Activated naive CD8-positive, alpha-beta T cell treated with anti-CD3 and anti-CD28 coated beads, Interleukin-2, amount 10 ng/mL, durations not matched to agents 7 days and 5 days (primary cell): ENCODE measurements at regions of chr12 and their contacts with region 1.

Region 1: DNA sequence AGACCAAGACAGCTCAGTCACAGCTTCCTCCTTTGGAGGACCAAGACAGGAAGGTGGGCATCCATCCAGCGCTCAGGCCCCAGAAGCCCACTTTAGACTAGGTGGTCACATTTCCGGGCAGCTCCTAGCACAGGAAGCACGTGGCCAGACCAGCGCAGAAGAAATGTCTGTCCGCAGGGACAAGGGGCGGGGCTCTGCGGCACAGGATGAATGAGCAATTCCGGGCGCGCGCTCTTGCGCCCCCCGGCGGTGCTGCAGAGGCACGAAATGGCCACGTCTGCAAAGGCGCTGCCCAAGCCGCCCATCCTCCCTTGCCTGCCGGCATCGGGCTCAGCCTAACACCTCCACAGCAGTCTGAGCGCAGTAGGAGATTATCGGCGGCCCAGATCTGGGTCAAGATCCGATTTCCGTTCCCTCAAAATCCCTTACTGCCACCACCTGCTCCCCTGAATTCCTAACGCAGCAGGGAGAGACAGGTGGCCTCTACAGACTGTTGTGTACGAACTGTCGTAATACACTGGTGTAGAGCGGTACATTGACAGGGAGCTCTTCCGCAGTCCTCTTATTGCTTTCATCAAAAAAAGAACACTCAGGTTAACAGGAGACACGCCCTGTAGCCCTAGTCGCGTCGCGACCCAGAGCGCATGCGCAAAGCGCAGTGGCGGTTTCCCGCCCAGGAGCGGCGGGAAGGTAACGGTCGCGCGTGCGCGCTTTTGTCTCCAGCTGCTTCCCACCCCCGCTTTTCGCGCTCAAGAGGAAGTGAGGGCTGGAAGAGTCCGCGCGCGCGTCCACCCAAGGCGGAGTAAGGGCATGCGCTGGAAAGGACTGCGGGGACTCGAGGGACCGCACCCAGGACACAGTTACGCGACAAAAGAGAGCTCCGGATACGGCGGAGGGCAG is 794 bp downstream of the TUBA1B start:
- DNase-seq: peak; percentile 95
- ATAC-seq: peak; percentile 53
- H3K4me3 Mint-ChIP-seq: peak overlapping the region; percentile 95
- H3K27ac Mint-ChIP-seq: peak overlapping the region; percentile 98
- H3K4me1 Mint-ChIP-seq: peaks cover 51% of the 10 kb centered on the region
- H3K27me3 Mint-ChIP-seq: no peaks in the 10 kb centered on the region

Region 2: DNA sequence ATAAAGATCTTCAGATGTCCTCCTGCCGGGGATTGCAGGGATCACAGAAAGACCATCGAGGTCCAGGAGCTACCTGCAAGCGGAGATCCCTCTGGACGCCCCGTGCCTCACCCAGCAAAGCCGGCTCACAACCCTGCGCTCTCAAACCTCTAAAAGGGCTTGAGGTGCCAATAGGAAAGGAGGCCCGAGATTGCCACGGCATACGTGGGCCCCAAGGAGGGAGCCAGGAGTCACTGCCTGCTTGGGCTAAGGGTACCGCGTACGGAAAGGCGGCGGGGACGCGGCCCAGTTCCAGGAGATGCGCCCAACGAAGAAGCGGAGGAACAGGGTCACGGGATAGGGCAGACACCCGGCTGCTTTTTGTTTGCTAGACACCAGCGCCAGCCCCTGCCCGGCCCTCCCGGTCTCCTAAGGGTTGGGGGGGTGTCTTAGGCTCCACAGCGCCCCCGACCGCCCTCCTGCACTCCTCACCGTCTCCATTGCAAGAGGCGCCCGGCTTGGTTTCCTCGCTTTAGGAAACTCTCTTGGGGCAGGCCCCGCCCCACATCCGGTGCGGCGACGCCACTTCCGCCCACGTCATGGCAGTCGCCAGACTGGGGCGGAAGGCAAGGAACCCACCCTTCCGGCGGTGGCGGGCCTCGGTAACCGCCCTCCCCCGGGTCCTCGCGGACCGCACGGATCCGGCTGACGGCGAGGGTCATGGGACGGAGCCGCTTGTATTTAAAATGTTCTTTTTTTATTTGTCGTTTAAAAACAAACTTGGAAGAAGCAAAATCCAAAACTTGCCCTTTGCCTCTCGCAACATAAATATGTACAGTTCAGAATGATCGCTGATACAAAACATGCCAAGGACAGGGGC is 111.9 kb before region 1 on chr12 and contains the start of gene PRKAG1:
- POLR2A ChIA-PET with region 1: interaction called, 10 read pairs
- DNase-seq: peak; percentile 98
- ATAC-seq: peak; percentile 91
- H3K4me3 Mint-ChIP-seq: peak within 1 kb of the TSS; percentile 95
- H3K27ac Mint-ChIP-seq: peak within 1 kb of the TSS; percentile 97
- H3K4me1 Mint-ChIP-seq: peaks cover 26% of the 10 kb centered on the region
- H3K27me3 Mint-ChIP-seq: no peaks in the 10 kb centered on the region
- total RNA-seq, gene PRKAG1: 50.0 to 56.6 TPM

Region 3: GRCh38 chr12:49088190-49088931 is 42.0 kb before region 1 on chr12:
- POLR2A ChIA-PET with region 1: interaction called, 30 read pairs
- DNase-seq: peak; percentile 69
- ATAC-seq: peak; percentile 86
- H3K4me3 Mint-ChIP-seq: peak overlapping the region; percentile 46
- H3K27ac Mint-ChIP-seq: no peak overlapping the region
- H3K4me1 Mint-ChIP-seq: peaks cover 49% of the 10 kb centered on the region
- H3K27me3 Mint-ChIP-seq: peaks cover 44% of the 10 kb centered on the region

Region 4: DNA sequence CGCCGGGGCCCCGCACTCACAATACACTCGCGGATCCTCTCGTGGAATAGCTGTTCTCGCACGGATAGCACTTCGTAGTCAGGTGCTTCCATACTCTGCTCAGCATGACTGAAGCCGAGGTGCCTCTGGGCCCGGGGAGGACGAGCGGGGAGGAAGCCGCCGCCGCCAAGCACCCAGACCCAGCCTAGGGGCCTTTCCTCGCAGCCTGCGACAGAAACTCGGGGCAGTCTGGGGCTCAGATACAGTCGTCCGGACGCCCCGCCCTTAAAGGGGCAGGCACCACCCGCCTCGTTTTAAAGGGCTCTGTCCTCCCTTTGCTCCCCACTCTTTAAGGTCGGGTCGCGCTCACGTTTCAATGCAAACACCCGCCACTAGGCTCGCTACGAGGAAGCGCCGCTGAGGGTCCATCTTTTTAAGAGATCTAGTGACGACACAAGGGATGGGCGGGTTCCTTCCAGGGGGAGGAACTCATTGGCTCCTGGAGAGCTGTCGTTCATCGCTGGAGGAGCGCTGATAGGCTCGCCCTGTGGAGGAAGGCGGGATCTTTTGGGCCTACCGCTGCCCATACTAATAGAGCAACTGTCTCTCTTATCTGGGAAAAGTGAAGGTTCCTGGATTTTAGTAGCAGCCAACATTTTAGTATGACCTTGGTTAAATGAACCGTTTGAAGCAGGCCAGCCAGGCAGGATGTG is 19.8 kb before region 1 on chr12 and contains the start of gene LMBR1L:
- POLR2A ChIA-PET with region 1: interaction called, 55 read pairs
- DNase-seq: peak; percentile 87
- ATAC-seq: peak; percentile 98
- H3K4me3 Mint-ChIP-seq: peak within 1 kb of the TSS; percentile 96
- H3K27ac Mint-ChIP-seq: peak within 1 kb of the TSS; percentile 94
- H3K4me1 Mint-ChIP-seq: peaks cover 23% of the 10 kb centered on the region
- H3K27me3 Mint-ChIP-seq: no peaks in the 10 kb centered on the region
- total RNA-seq, gene LMBR1L: 111 to 112 TPM

Region 5: GRCh38 chr12:49223590-49224369 is 93.4 kb after region 1 on chr12:
- POLR2A ChIA-PET with region 1: interaction called, 15 read pairs
- DNase-seq: no peak
- ATAC-seq: no peak
- H3K4me3 Mint-ChIP-seq: no peak overlapping the region
- H3K27ac Mint-ChIP-seq: no peak overlapping the region
- H3K4me1 Mint-ChIP-seq: peaks cover 2% of the 10 kb centered on the region
- H3K27me3 Mint-ChIP-seq: peaks cover 2% of the 10 kb centered on the region

Region 6: DNA sequence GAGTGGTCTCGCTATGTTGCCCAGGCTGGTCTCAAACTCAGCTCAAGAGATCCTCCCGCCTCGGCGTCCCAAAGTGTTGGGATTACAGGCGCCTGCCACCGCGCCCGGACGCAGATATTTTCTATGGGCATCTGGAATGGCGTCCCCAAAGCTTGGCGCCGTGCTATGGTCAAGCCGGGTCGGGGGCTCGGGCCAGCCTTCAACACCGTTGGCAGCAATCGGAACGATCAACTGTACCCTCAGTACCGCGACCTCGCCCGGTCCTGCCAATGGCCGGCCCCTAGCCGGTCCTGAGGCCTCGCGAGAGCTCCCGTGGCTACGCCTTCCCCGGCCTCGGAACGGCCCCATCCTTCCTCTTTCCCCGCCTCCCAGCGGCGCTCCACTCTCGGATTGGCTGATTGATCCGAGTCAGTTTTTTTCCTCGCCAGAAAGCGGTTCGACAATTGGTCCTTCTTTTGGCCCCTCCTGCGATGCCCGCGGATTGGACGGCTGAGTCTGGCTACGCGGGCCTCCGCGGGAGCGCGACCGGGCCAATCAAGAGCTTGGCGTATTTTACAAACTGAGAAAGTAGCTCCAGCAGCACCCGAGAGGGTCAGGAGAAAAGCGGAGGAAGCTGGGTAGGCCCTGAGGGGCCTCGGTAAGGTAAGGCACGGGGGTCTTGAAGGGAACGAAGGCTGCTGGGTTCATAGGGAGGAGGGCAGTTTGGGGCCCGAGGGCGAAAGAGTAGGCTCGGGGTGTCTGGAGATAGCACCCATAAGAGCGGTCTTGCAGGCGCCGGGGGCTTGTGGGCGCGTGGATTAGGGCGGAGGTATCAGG is 192.5 kb after region 1 on chr12 and contains the start of gene TROAP:
- POLR2A ChIA-PET with region 1: interaction called, 23 read pairs
- DNase-seq: peak; percentile 95
- ATAC-seq: peak; percentile 98
- H3K4me3 Mint-ChIP-seq: peak within 1 kb of the TSS; percentile 100
- H3K27ac Mint-ChIP-seq: peak within 1 kb of the TSS; percentile 98
- H3K4me1 Mint-ChIP-seq: peaks cover 24% of the 10 kb centered on the region
- H3K27me3 Mint-ChIP-seq: peaks cover 5% of the 10 kb centered on the region
- total RNA-seq, gene TROAP: 73.8 to 80.4 TPM

Region 7: GRCh38 chr12:49358483-49359141 is 228.2 kb after region 1 on chr12:
- POLR2A ChIA-PET with region 1: no interaction called
- DNase-seq: no peak
- ATAC-seq: peak; percentile 95
- H3K4me3 Mint-ChIP-seq: no peak overlapping the region
- H3K27ac Mint-ChIP-seq: no peak overlapping the region
- H3K4me1 Mint-ChIP-seq: peaks cover 9% of the 10 kb centered on the region
- H3K27me3 Mint-ChIP-seq: peaks cover 28% of the 10 kb centered on the region